ENCODE measurements at regions of chr6 and their contacts with region 1.

Region 1: DNA sequence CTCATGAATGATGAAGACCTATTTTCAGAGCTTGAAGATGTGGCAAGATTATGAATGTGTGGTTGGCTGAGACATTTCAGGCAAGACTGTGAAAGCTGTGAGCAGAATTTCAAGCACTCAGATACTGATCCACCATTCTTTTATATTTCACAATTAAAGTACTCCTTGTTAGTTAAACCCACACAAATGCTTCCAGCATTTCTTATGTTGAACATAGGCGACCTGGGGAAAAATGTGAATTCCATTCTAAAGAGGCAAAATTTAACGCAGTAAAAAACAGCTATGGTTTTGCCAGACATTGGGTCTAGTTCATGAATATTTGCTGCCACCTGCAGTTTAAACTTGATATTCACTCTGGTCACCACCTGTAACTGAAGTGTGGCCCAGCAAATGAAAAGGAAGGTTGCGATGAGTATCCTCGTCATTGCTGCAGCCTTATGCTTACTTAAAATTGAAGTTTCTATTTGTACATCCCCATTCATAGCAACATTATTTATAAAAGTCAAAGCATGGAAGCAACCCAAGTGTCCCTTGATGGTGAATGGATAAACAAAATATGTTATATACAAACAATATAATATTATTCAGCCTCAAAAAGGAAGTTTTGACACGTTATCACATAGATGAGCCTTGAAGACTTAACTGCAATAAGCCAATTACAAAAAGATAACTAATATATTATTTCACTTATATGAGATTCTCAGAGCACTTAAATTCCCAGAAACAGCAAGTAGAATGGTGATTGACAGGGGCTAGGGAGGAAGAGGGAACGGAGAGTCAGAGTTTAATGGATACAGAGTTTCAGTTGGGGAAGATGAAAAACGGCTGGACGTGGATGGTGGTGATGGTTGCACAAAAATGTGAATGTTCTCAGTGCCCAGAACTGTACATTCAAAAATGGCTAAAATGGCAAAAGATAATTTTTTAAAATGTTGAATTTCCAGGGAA is 32.4 kb upstream of the FAM184A start:
- DNase-seq: peak; percentile 64
- H3K4me3 ChIP-seq: no peak overlapping the region
- H3K27ac ChIP-seq: no peak overlapping the region
- H3K4me1 ChIP-seq: no peaks in the 10 kb centered on the region
- H3K27me3 ChIP-seq: no peaks in the 10 kb centered on the region
- CTCF ChIP-seq: peak; percentile 31 to 34
- POLR2A ChIP-seq: no peak

Region 2: GRCh38 chr6:118800394-118801071 is 310.3 kb before region 1 on chr6:
- CTCF ChIA-PET with region 1: interaction called, 12 read pairs
- POLR2A ChIA-PET with region 1: no interaction called
- dilution Hi-C with region 1: no loop called
- intact Hi-C with region 1: no loop called
- DNase-seq: peak; percentile 76
- H3K4me3 ChIP-seq: no peak overlapping the region
- H3K27ac ChIP-seq: no peak overlapping the region
- H3K4me1 ChIP-seq: no peaks in the 10 kb centered on the region
- H3K27me3 ChIP-seq: no peaks in the 10 kb centered on the region
- CTCF ChIP-seq: peak; percentile 83 to 86
- POLR2A ChIP-seq: no peak

Region 3: GRCh38 chr6:118963003-118963402 is 147.9 kb before region 1 on chr6:
- CTCF ChIA-PET with region 1: interaction called, 410 read pairs
- POLR2A ChIA-PET with region 1: no interaction called
- dilution Hi-C with region 1: no loop called
- intact Hi-C with region 1: loop called (anchors 1 kb)
- DNase-seq: peak; percentile 5
- H3K4me3 ChIP-seq: no peak overlapping the region
- H3K27ac ChIP-seq: no peak overlapping the region
- H3K4me1 ChIP-seq: no peaks in the 10 kb centered on the region
- H3K27me3 ChIP-seq: no peaks in the 10 kb centered on the region
- CTCF ChIP-seq: no peak
- POLR2A ChIP-seq: no peak

Region 4: DNA sequence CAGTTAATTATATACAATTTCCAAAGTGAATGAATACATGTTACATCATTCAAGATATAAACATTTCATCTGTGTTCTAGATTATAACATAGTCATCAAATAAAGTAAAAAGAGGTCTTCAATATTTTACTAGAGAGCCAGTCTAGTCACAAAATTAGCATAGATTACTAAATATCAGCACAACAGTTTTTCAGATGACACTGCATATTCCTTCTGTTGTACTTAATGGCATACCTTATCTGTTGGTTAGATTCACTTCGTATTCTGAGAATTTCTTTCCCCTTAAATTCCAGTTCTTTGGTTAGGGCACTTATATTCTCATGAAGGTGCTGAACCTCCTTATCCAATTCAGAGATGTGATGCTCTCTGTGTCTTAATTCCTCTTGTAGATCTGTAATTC is 136.1 kb before region 1 on chr6:
- CTCF ChIA-PET with region 1: interaction called, 410 read pairs
- POLR2A ChIA-PET with region 1: no interaction called
- dilution Hi-C with region 1: no loop called
- intact Hi-C with region 1: no loop called
- DNase-seq: no peak
- H3K4me3 ChIP-seq: no peak overlapping the region
- H3K27ac ChIP-seq: no peak overlapping the region
- H3K4me1 ChIP-seq: no peaks in the 10 kb centered on the region
- H3K27me3 ChIP-seq: no peaks in the 10 kb centered on the region
- CTCF ChIP-seq: no peak
- POLR2A ChIP-seq: no peak

Region 5: GRCh38 chr6:119129148-119129967 is 18.5 kb after region 1 on chr6:
- CTCF ChIA-PET with region 1: interaction called, 20 read pairs
- POLR2A ChIA-PET with region 1: no interaction called
- dilution Hi-C with region 1: no loop called
- intact Hi-C with region 1: no loop called
- DNase-seq: peak; percentile 77
- H3K4me3 ChIP-seq: peak overlapping the region in 1 of 3 experiments; percentile 31
- H3K27ac ChIP-seq: peak overlapping the region; percentile 92
- H3K4me1 ChIP-seq: peaks cover 22% of the 10 kb centered on the region
- H3K27me3 ChIP-seq: no peaks in the 10 kb centered on the region
- CTCF ChIP-seq: peak; percentile 62 to 64
- POLR2A ChIP-seq: no peak

Region 6: GRCh38 chr6:119210596-119210995 is 99.7 kb after region 1 on chr6:
- CTCF ChIA-PET with region 1: no interaction called
- POLR2A ChIA-PET with region 1: no interaction called
- dilution Hi-C with region 1: no loop called
- intact Hi-C with region 1: no loop called
- DNase-seq: no peak
- H3K4me3 ChIP-seq: no peak overlapping the region
- H3K27ac ChIP-seq: no peak overlapping the region
- H3K4me1 ChIP-seq: no peaks in the 10 kb centered on the region
- H3K27me3 ChIP-seq: no peaks in the 10 kb centered on the region
- CTCF ChIP-seq: no peak
- POLR2A ChIP-seq: no peak

Region 7: DNA sequence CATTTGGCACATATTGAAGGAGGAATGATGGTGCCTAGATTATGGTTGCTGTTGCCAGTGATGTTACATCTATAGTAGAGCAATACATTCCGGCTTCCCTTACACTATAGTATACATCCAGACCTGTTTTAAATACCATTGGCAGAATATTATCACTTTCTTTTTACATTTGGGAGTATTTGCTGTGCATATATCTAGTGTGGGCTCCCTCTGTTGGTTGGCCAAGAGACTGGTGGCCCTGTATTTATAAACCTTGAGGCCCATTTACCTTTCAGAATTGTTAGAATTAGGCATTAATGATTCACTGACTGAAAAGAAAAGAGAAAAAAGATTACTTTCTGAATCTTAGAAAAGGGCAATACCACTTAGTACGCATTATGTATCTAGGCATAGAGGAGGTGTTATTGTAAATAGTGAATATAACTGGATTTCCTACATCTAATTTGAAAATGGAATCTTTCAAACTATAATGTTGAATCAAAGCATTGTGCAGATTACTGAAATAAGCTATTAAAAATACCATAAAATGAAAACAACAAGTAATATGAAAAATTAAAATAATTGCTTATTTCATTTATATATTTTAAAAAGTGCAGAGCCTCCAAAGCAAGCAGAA is 867.5 kb after region 1 on chr6:
- CTCF ChIA-PET with region 1: no interaction called
- POLR2A ChIA-PET with region 1: no interaction called
- dilution Hi-C with region 1: no loop called
- intact Hi-C with region 1: no loop called
- DNase-seq: no peak
- H3K4me3 ChIP-seq: no peak overlapping the region
- H3K27ac ChIP-seq: no peak overlapping the region
- H3K4me1 ChIP-seq: no peaks in the 10 kb centered on the region
- H3K27me3 ChIP-seq: no peaks in the 10 kb centered on the region
- CTCF ChIP-seq: peak in 1 of 2 donors; percentile 13
- POLR2A ChIP-seq: no peak

Measured in endothelial cell of umbilical vein (primary cell).